Natural killer cell (primary cell): ENCODE measurements at regions of chr7 and their contacts with region 1.

Region 1: DNA sequence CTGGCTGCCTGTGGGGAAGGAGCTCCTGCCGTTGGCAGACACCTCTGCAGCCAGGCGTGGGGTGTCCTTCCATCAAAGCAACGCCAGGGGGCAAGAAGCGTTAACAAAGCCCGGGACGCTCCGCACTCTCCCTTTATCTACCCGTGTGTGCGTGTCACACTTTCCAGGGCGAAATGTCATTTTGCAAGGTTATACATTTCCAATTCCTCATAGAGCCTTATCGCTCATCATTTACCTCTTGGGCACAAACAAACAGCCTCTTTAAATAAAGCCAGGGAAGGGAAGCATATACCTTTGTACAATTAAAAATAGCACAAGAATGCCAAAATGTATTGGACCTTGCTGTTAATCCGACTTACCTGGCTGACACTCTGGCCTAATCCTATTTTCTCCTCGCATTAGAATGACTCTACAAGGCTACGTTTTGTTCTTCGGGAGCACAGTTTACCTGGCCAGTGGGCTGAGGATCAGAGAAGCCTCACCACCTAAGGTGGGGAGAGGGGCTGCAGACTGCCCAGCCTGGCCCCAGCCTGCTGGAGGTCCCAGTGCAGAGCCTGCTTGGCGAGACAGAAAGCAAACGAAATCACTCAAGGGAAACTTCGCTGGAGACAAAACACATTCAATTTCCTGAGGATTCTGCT is 77.6 kb upstream of the EN2 start:
- DNase-seq: peak; percentile 45 to 77
- ATAC-seq: peak; percentile 77 to 96 (median 94)
- H3K4me3 ChIP-seq: no peak overlapping the region
- H3K4me3 Mint-ChIP-seq: peak overlapping the region; percentile 28
- H3K27ac ChIP-seq: no peak overlapping the region
- H3K27ac Mint-ChIP-seq: no peak overlapping the region
- H3K4me1 ChIP-seq: peaks cover 13% of the 10 kb centered on the region
- H3K4me1 Mint-ChIP-seq: peaks cover 11 to 25% of the 10 kb centered on the region in 2 donors
- H3K27me3 ChIP-seq: peaks cover 54% of the 10 kb centered on the region
- H3K27me3 Mint-ChIP-seq: peaks cover 73 to 79% of the 10 kb centered on the region in 2 donors
- CTCF ChIP-seq: peak; percentile 81

Region 2: DNA sequence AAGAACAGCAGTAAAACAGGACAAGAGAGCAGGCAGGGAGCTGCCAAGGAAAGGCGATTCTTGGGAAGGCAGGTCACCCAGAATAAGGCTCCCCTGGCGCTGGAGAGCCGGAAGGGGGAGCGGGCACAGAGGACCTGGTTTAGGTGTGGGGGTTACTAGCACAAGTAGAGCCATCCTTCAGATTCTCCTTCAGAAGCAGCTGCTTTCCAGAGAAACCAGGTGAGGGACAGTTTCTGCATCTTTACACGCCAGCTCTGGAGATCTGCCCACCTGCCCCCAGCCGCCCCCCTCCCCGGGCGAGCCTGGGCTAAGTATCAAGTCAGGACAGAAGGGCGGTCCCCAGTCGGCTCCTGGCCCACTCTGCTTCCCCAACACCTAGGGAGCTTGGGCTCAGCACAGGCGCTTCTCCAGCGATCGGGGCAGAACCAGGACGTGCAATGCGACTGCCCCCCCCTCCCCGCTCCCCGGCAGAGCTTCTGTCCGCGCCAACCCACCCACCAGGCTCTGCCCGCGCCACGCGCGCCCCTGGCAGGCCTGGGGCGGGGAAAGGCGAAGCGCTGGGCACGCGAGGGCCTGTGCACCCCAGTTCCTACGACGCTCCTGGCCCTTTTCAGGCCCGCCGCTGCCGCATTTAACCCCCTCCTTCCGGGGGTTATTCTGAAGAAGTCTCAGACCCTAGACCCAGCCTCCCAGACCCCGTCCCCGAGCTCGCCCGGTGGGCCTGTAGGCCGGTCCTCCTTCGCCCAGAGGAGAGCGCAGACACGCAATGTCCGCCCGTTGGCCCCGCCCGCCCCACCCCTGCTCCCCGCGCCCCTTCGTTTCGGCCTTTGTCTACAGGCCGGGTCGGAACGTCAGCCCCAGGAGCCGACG is 73.2 kb after region 1 on chr7:
- intact Hi-C with region 1: loop called (anchors 2 kb)
- DNase-seq: no peak
- ATAC-seq: no peak
- H3K4me3 ChIP-seq: no peak overlapping the region
- H3K4me3 Mint-ChIP-seq: no peak overlapping the region
- H3K27ac ChIP-seq: no peak overlapping the region
- H3K27ac Mint-ChIP-seq: no peak overlapping the region
- H3K4me1 ChIP-seq: peaks cover 12% of the 10 kb centered on the region
- H3K4me1 Mint-ChIP-seq: peaks cover 10 to 24% of the 10 kb centered on the region in 2 donors
- H3K27me3 ChIP-seq: peaks cover 58% of the 10 kb centered on the region
- H3K27me3 Mint-ChIP-seq: peaks cover 56 to 59% of the 10 kb centered on the region in 2 donors
- CTCF ChIP-seq: no peak

Region 3: DNA sequence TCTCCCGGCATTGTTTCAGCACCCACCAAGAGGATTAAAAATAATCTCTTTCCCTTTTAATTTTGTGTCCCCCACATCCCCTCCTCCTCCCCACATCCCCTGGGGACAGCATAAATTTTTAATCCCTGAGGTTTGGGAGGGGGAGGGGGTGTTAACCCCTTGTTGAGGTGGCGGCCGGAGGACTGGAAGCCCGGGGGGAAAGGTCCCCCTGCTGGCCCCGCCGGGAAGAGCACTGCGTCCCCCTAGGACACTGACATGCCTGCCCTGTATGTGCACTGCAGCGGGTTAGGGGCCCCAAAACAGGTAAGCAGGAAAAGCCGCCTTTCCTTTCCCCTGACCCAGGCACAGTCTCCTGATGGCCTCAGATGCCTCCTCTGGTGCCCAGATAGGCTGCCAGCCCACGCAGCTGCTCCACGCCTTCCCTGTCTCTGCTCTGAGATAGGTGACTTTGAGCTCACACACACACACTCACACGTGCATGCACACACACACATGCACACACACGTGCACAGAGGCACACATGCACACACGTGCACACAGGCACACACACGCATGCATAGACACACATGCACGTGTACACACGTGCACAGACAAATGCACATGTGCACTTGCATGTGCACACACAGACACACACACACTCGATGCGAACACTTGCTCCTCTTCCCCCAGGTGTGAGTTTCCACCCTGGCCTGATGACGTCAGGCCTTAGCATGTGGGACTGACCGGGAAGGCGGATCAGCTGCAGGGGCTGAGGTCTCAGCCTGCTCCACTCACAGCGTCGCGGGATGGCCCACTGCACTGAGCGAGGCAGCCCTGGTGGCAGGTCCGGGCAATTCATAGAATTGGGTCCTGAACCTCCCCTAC is 153.7 kb after region 1 on chr7:
- intact Hi-C with region 1: loop called (anchors 5 kb)
- DNase-seq: peak in 1 of 2 donors; percentile 35
- ATAC-seq: peak in 2 of 3 donors; percentile 21 to 48
- H3K4me3 ChIP-seq: no peak overlapping the region
- H3K4me3 Mint-ChIP-seq: peak overlapping the region; percentile 64
- H3K27ac ChIP-seq: no peak overlapping the region
- H3K27ac Mint-ChIP-seq: no peak overlapping the region
- H3K4me1 ChIP-seq: peaks cover 14% of the 10 kb centered on the region
- H3K4me1 Mint-ChIP-seq: peaks cover 12 to 17% of the 10 kb centered on the region in 2 donors
- H3K27me3 ChIP-seq: peaks cover 21% of the 10 kb centered on the region
- H3K27me3 Mint-ChIP-seq: peaks cover 66 to 70% of the 10 kb centered on the region in 2 donors
- CTCF ChIP-seq: peak; percentile 26